Activated B cell treated with CpG ODN at 0.5 μM for 24 hours (primary cell): ENCODE measurements at regions of chr17 and their contacts with region 1.

Region 1: DNA sequence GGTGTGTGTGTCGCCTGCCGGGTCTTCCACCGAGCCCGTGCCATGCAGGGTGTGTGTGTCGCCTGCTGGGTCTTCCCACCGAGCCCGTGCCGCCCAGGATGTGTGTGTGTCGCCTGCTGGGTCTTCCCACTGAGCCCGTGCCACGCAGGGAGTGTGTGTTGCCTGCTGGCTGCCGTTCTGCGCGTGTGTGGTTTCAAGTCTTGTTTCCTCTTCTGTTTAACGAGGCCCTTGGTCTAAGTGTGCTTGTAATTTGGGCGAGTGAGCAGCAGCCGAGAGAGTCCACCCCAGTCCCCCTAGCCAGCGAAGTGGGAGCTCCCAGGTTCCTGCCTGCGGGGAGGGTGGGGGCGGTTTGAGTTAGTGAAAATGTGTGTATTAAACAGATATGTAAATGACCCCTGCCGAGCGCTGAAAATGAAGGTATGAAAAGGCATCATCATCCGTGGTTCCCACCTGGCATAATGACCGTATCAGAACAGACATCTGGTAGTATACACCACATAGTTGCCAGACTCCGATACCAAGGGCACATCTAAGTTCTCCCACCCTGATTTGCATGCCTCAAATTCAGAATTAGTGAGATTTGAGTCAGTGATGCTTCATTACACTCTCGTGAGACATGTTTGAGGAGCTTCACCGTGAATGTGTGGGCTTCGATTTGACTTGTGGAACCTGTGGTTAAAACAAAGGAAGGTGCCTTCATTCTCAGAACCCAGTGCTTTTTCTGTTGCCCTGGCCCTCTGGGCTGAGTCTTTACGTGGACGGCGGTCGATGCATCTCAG is 114.5 kb upstream of the CHMP6 start:
- DNase-seq: peak; percentile 54
- ATAC-seq: peak; percentile 91
- H3K4me3 Mint-ChIP-seq: peak overlapping the region; percentile 72
- H3K27ac Mint-ChIP-seq: peak overlapping the region; percentile 94
- H3K4me1 Mint-ChIP-seq: peaks cover 30% of the 10 kb centered on the region
- H3K27me3 Mint-ChIP-seq: no peaks in the 10 kb centered on the region
- CTCF ChIP-seq: no peak

Region 2: GRCh38 chr17:80605326-80606066 is 271.6 kb before region 1 on chr17:
- CTCF ChIA-PET with region 1: no interaction called
- POLR2A ChIA-PET with region 1: interaction called, 3 read pairs
- intact Hi-C with region 1: loop called (anchors 1 kb)
- DNase-seq: peak; percentile 25
- ATAC-seq: peak; percentile 94
- H3K4me3 Mint-ChIP-seq: peak overlapping the region; percentile 48
- H3K27ac Mint-ChIP-seq: peak overlapping the region; percentile 79
- H3K4me1 Mint-ChIP-seq: peaks cover 53% of the 10 kb centered on the region
- H3K27me3 Mint-ChIP-seq: no peaks in the 10 kb centered on the region
- CTCF ChIP-seq: no peak

Region 3: GRCh38 chr17:80855948-80856862 is 20.9 kb before region 1 on chr17:
- CTCF ChIA-PET with region 1: no interaction called
- POLR2A ChIA-PET with region 1: interaction called, 5 read pairs
- intact Hi-C with region 1: loop called (anchors 1 kb)
- DNase-seq: no peak
- ATAC-seq: peak; percentile 95
- H3K4me3 Mint-ChIP-seq: no peak overlapping the region
- H3K27ac Mint-ChIP-seq: peak overlapping the region; percentile 69
- H3K4me1 Mint-ChIP-seq: peaks cover 18% of the 10 kb centered on the region
- H3K27me3 Mint-ChIP-seq: no peaks in the 10 kb centered on the region
- CTCF ChIP-seq: no peak

Region 4: GRCh38 chr17:80892019-80892855 is 15.1 kb after region 1 on chr17:
- CTCF ChIA-PET with region 1: interaction called, 4 read pairs
- POLR2A ChIA-PET with region 1: interaction called, 5 read pairs
- intact Hi-C with region 1: loop called (anchors 1 kb)
- DNase-seq: no peak
- ATAC-seq: peak; percentile 90
- H3K4me3 Mint-ChIP-seq: peak overlapping the region; percentile 35
- H3K27ac Mint-ChIP-seq: peak overlapping the region; percentile 46
- H3K4me1 Mint-ChIP-seq: peaks cover 19% of the 10 kb centered on the region
- H3K27me3 Mint-ChIP-seq: no peaks in the 10 kb centered on the region
- CTCF ChIP-seq: no peak

Region 5: GRCh38 chr17:80908776-80909175 is 31.6 kb after region 1 on chr17:
- CTCF ChIA-PET with region 1: interaction called, 3 read pairs
- POLR2A ChIA-PET with region 1: interaction called, 49 read pairs
- intact Hi-C with region 1: loop called (anchors 1 kb)
- DNase-seq: no peak
- ATAC-seq: no peak
- H3K4me3 Mint-ChIP-seq: no peak overlapping the region
- H3K27ac Mint-ChIP-seq: no peak overlapping the region
- H3K4me1 Mint-ChIP-seq: peaks cover 56% of the 10 kb centered on the region
- H3K27me3 Mint-ChIP-seq: no peaks in the 10 kb centered on the region
- CTCF ChIP-seq: no peak